Endothelial cell of umbilical vein (primary cell): ENCODE measurements at regions of chr6 and their contacts with region 1.

Region 1: GRCh38 chr6:3887150-3887700 is 38.1 kb downstream of the FAM50B start:
- DNase-seq: peak; percentile 67
- H3K4me3 ChIP-seq: no peak overlapping the region
- H3K27ac ChIP-seq: no peak overlapping the region
- H3K4me1 ChIP-seq: peaks cover 19% of the 10 kb centered on the region
- H3K27me3 ChIP-seq: no peaks in the 10 kb centered on the region
- CTCF ChIP-seq: peak; percentile 45 to 62
- POLR2A ChIP-seq: no peak

Region 2: GRCh38 chr6:3075522-3076113 is 811.6 kb before region 1 on chr6:
- CTCF ChIA-PET with region 1: no interaction called
- POLR2A ChIA-PET with region 1: no interaction called
- dilution Hi-C with region 1: no loop called
- intact Hi-C with region 1: no loop called
- DNase-seq: peak; percentile 18
- H3K4me3 ChIP-seq: no peak overlapping the region
- H3K27ac ChIP-seq: no peak overlapping the region
- H3K4me1 ChIP-seq: peaks cover 9% of the 10 kb centered on the region
- H3K27me3 ChIP-seq: no peaks in the 10 kb centered on the region
- CTCF ChIP-seq: no peak
- POLR2A ChIP-seq: no peak

Region 3: DNA sequence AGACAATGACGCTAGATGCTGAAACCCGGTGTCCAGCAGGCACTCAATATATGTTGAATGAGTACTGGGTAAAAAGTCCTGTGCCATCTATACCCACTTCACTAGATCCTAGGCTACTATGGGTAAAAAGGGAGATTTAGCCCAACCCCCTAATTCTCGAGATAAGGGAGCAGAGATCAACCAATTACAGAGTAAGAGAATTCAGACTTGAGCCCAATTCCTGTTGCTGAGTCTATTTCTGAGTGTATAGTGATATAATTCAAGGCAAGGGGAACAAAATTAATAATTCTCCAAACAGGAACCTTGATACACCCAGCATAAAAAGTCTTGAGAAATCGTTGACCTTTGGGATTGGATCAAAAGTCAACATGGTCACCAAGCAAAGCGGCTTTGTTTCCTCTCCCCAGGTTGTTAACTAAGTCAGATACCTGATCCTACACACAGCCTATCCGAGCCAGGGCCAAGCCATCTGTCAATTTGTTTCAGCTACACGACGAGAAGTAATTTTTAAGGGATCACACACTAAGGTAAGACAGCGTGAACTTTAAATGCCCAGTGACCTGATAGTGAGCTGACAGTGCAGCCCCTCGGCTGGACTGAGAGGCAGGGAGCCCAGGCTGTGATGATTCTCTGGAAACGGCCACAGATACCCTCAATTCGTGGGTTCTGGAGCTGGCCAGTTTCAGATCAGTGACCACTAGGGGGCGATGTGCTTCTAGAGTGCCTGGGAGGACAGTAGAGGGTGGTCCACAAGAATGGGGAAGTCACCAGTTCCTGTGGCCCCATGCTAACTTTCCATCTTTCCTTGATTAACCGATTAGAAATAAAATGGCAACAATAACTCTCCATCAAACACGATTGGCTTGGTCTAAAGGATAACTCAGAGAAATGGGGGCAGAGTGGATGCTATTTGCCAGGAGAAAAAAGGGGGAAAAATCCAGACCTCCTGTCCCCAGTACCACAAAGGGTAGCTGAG is 476.6 kb before region 1 on chr6:
- CTCF ChIA-PET with region 1: no interaction called
- POLR2A ChIA-PET with region 1: no interaction called
- dilution Hi-C with region 1: no loop called
- intact Hi-C with region 1: loop called (anchors 2 kb)
- DNase-seq: peak; percentile 59
- H3K4me3 ChIP-seq: no peak overlapping the region
- H3K27ac ChIP-seq: no peak overlapping the region
- H3K4me1 ChIP-seq: no peaks in the 10 kb centered on the region
- H3K27me3 ChIP-seq: no peaks in the 10 kb centered on the region
- CTCF ChIP-seq: peak; percentile 85 to 87
- POLR2A ChIP-seq: no peak

Region 4: DNA sequence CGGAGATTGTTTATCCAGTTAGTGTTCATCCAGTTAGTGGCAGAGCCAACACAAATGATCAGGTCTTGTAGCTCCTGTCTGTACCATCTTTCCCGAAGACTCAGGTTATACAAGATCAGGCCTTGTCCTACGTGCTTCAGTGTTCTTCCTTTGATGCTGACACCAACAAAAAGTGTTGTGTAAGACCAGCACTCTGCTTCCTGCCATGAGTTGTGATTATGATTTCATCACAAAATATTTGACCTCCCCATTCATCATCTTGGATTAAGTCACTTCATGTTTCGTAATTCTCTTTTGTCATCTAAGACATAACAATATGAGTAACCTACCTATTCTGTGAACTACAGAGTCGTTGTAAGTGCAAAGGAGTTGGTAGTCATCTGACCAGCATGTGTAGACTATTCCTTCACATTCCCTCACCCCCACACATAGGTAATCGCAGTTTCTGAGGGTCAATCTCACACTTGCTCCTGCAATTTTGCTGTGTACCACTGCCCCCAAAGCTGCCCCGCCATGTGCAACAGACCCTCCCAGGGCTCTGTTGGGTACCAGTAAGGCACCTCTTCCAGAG is 294.8 kb before region 1 on chr6:
- CTCF ChIA-PET with region 1: no interaction called
- POLR2A ChIA-PET with region 1: no interaction called
- dilution Hi-C with region 1: no loop called
- intact Hi-C with region 1: no loop called
- DNase-seq: peak; percentile 71
- H3K4me3 ChIP-seq: no peak overlapping the region
- H3K27ac ChIP-seq: no peak overlapping the region
- H3K4me1 ChIP-seq: peaks cover 6% of the 10 kb centered on the region
- H3K27me3 ChIP-seq: peaks cover 0 to 3% of the 10 kb centered on the region in 2 experiments
- CTCF ChIP-seq: no peak
- POLR2A ChIP-seq: no peak

Region 5: DNA sequence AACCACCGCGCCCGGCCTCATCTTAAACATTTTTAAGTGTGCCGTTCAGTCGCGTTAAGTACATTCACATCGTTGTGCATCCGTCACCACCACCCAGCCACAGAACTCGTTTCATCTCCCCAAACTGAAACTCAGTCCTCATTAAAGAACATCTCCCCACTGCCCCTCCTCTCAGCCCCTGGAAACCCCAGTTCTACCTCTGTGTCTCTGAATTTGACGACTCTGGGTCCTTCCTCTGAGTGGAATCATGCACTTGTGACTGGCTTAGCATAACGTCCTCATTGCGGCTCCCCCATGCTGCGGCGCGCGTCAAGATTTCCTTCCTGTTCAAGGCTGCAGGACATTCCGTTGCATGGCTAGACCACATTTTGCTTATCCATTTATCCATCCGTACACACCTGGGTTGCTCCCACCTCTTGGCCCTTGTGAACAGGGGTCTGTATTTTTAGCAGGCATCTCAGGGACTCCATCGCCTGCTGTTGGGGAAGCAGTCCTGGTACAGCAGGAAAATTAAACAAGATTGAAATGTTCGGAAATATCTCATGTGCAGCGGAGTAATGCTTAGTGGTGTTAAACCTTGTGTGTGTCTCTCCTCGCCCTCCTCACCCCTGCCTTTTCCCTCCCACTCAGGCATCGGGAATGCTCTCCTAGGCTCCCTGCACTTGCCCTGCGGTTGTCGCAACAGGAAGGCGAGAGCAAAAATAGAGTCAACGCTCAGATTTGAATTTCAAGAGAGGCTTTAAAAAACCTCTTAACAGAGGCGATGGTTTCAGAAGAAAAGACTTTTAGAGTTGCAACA is 263.6 kb before region 1 on chr6:
- CTCF ChIA-PET with region 1: no interaction called
- POLR2A ChIA-PET with region 1: no interaction called
- dilution Hi-C with region 1: no loop called
- intact Hi-C with region 1: no loop called
- DNase-seq: no peak
- H3K4me3 ChIP-seq: no peak overlapping the region
- H3K27ac ChIP-seq: no peak overlapping the region
- H3K4me1 ChIP-seq: no peaks in the 10 kb centered on the region
- H3K27me3 ChIP-seq: peaks cover 5 to 10% of the 10 kb centered on the region in 2 experiments
- CTCF ChIP-seq: no peak
- POLR2A ChIP-seq: no peak

Region 6: DNA sequence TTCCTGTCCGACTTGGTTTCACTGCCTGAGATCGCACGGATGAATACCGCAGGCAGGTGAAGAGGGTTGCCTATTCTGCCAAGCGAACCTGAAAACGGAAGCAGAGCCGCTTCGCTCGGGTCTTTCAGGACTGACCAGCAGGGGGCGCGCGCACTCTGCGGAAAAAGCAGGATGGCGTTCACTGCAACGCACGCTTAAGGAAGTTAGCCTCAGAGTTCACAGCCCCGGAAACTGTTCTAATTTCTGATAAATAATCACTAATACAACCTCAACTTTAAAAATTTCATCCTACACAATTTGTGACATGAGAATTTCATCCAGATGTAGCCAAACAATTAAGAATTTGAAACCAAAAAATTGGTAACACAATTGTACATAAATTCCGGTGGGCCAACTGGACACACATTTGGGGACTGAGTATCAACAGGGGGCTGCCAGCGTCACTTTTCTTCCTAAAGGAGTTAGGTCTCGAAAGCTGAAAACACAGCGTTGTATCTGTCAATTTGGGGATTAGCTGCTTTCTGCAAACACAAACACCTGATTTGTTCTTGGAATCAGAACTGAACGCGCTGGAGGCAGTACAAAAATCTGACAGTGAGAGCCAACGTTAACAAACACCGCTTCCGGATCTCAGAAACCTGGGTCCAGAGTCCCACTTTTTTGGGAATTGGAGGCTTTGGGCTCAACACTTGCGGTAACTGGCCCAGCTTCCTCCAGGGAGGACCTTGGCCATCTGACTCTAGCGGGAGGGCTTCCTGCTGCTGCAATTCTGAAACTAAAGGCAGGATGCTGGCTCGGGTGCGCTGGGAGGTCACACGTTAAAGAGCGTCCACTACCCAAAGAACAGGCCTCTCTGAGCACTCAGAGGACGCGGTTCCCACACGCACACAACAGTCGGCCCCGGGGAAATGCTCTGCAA is 144.5 kb before region 1 on chr6:
- CTCF ChIA-PET with region 1: interaction called, 75 read pairs
- POLR2A ChIA-PET with region 1: interaction called, 3 read pairs
- dilution Hi-C with region 1: no loop called
- intact Hi-C with region 1: loop called (anchors 1 kb)
- DNase-seq: peak; percentile 88
- H3K4me3 ChIP-seq: peak overlapping the region in 1 of 3 experiments; percentile 25
- H3K27ac ChIP-seq: peak overlapping the region; percentile 74
- H3K4me1 ChIP-seq: peaks cover 77% of the 10 kb centered on the region
- H3K27me3 ChIP-seq: no peaks in the 10 kb centered on the region
- CTCF ChIP-seq: peak; percentile 88 to 93
- POLR2A ChIP-seq: no peak

Region 7: GRCh38 chr6:3751730-3752542 is 135.3 kb before region 1 on chr6:
- CTCF ChIA-PET with region 1: interaction called, 75 read pairs
- POLR2A ChIA-PET with region 1: interaction called, 5 read pairs
- dilution Hi-C with region 1: no loop called
- intact Hi-C with region 1: loop called (anchors 1 kb)
- DNase-seq: peak; percentile 95
- H3K4me3 ChIP-seq: peak overlapping the region; percentile 85 to 96 (median 89)
- H3K27ac ChIP-seq: peak overlapping the region; percentile 99
- H3K4me1 ChIP-seq: peaks cover 42% of the 10 kb centered on the region
- H3K27me3 ChIP-seq: no peaks in the 10 kb centered on the region
- CTCF ChIP-seq: peak; percentile 24 to 60
- POLR2A ChIP-seq: no peak

Region 8: DNA sequence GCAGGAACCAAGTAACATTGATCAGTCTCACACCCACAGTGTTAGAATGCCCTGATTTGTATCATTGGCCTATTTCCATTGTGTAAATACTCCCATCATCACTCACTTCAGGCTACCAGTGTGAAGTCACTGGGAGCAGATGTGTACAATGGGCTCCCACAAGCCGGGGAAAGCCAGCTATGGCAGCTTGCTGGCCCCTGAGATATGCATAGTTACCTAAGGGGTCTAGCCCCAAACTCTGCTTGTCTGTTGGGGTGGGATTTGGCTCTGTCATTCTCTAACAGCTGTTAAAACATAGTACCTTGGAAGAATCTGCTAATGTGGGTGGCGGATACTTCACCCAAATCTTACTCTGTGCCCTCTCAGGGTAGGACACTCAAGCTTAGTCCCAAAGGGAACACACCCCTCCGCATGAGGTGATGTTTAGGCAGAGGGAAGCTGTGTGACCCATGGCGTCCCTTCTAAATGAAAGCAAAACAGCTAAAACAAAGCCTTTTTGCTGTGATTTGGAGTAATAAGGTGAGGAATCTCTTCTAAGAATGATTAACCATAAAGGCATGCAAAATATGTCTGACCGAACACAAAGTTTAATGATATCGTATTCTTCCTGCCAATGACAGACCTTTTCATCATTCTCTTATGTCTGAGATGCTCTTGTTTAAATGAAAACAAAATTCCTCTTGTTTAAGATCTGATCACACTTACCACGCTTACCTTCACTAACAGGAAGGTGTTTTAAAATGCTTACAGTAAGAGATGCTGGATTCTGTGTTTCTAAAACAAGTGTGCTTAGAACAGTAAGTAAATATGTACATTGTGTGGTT is 89.8 kb before region 1 on chr6:
- CTCF ChIA-PET with region 1: interaction called, 9 read pairs
- POLR2A ChIA-PET with region 1: no interaction called
- dilution Hi-C with region 1: no loop called
- intact Hi-C with region 1: loop called (anchors 1 kb)
- DNase-seq: peak; percentile 83
- H3K4me3 ChIP-seq: no peak overlapping the region
- H3K27ac ChIP-seq: peak overlapping the region; percentile 100
- H3K4me1 ChIP-seq: peaks cover 39% of the 10 kb centered on the region
- H3K27me3 ChIP-seq: no peaks in the 10 kb centered on the region
- CTCF ChIP-seq: no peak
- POLR2A ChIP-seq: peak; percentile 58

Region 9: DNA sequence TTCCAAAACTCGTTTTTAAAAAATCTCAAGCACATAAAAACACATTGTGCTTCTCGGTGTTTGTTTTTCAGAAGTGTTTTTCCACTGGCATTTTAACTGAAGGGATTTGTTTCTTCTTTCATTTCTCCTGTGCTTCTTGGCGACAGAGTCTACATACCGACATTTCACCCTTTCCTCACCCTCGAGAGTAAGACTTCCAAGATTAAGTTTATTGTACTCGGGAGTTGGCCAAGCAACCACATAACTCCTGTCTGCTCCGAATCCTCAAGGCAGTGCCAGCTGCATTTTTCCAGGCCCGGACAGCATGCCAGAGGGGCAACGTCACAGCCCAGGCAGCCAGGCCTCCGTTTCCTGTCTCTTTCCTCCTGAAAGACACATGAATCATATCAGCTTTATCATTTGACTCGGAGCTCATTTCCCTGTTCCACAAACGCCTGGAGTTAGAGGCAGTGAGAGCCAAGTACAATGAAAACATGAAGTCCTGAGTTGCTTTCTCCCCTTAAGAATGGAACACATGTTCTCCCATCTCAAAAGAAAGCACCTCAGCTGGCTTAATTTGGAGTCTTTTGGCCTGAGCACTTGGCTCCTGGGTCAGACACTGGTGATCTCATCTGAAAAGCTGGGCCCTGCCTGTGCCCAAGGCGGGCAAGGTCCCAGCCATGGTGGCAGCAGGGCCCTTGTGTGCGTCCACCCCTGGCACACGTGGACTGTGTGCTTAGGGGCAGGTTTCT is 61.2 kb before region 1 on chr6:
- CTCF ChIA-PET with region 1: interaction called, 12 read pairs
- POLR2A ChIA-PET with region 1: interaction called, 10 read pairs
- dilution Hi-C with region 1: no loop called
- intact Hi-C with region 1: loop called (anchors 1 kb)
- DNase-seq: peak; percentile 100
- H3K4me3 ChIP-seq: peak overlapping the region in 1 of 3 experiments; percentile 15
- H3K27ac ChIP-seq: peak overlapping the region; percentile 96
- H3K4me1 ChIP-seq: peaks cover 43% of the 10 kb centered on the region
- H3K27me3 ChIP-seq: no peaks in the 10 kb centered on the region
- CTCF ChIP-seq: no peak
- POLR2A ChIP-seq: no peak

Region 10: DNA sequence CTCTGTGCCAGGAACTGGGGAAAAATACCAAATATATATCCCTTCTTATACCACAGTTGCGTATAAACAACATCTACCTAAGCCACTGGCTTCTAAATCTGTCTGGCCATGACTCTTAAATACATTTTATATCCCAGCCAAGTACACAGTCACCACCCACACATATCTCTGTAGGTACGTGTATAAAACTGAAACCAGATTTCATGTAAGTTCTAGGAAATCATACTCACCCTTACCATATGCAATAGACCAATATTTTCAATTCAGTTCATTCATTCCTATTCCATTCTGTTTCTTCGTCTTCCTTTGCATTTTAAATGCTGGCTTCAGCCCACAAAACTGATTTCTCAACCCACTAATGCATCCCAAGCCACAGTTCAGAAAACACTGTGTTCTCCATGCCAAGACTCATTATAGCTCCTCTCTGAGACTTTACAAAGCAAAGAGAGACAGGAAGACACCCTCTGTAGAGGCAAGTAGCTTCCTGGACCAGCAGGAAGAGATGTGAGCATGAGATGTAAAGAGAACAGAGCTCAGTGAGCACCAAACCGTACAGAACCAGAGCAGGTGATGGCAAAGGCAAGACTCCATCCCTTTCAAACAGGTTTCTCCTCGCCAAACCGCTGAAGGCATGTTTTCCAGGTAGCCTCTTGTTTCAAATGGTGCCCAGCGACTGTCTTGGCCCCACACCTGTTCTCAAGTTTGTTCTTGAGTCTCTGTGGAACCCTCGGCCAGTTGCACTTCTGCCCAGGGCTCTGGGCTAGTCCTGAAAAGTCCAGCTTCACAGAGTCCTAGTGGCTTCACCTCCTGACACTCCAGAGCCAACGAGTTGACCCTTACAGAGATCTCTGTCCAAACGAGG is 19.4 kb before region 1 on chr6:
- CTCF ChIA-PET with region 1: no interaction called
- POLR2A ChIA-PET with region 1: no interaction called
- dilution Hi-C with region 1: no loop called
- intact Hi-C with region 1: no loop called
- DNase-seq: no peak
- H3K4me3 ChIP-seq: no peak overlapping the region
- H3K27ac ChIP-seq: no peak overlapping the region
- H3K4me1 ChIP-seq: no peaks in the 10 kb centered on the region
- H3K27me3 ChIP-seq: no peaks in the 10 kb centered on the region
- CTCF ChIP-seq: no peak
- POLR2A ChIP-seq: no peak

Region 11: DNA sequence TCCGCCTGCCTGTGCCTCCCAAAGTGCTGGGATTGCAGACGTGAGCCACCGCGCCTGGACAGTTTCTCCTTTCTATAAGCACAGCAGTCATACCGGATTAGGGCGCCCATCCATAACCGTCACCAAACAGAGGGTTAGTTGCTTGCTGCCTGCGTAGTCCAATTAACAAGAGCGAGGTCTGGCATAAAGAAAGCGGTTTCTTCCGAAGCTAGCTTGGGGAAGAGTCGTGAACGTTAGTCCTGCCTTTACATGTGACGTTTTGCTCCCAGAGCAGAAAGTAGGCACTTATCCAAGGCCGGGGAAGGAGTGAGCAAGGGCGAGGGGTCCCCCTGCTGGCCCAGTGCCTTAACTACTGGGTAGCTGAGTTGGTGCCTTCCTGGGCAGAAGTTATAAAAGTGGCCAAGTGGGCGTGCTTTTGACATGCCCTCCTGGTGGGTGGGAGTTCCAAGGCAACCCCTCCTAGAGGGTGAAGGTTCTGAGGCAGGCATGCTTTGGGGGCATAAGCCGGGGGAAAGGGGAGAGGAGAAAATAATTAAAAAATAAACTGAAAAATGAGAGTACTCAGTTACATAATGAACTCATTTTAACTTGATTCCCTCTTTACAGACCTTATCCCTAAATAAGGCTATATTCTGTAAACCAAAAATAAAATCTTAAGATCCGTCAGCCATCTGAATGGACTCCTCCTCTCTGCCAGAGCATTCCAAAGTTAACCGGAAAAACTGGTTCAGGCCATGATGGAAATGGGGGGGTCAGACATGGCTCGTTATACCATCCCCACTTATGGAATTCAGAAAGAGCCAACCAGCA is 103.7 kb after region 1 on chr6:
- CTCF ChIA-PET with region 1: interaction called, 7 read pairs
- POLR2A ChIA-PET with region 1: no interaction called
- dilution Hi-C with region 1: no loop called
- intact Hi-C with region 1: loop called (anchors 2 kb)
- DNase-seq: peak; percentile 91
- H3K4me3 ChIP-seq: no peak overlapping the region
- H3K27ac ChIP-seq: no peak overlapping the region
- H3K4me1 ChIP-seq: peaks cover 17% of the 10 kb centered on the region
- H3K27me3 ChIP-seq: no peaks in the 10 kb centered on the region
- CTCF ChIP-seq: peak; percentile 92 to 94
- POLR2A ChIP-seq: no peak